SK-N-SH (cell line): ENCODE measurements at regions of chr18 and their contacts with region 1.

Region 1: DNA sequence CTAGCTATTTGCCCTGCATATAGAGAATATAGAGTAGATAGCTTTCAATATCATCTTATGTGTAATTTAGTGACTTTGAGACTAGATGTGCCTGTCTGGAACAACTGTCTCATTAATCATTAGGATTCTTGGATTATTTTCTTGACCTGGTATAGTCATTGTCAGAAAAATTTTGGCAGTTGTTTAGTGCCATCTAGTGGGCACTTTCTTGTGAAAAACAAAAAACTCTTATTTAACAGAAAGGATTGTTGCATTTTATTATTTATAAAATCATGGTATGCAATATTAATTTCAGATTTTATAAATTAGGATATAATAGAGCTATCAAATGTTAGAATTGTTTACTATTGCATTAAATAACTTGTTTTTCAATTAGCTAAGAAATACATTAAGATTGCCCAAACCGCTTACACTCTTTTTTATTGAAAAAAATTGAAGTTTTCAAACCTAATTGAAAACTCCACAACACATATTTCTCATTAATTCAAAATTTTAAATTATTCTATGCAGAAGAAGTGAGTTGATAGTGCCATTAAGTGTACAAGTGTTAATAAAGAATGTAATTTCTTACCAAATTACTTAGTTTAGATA is 80.3 kb downstream of the DYNAP start:
- DNase-seq: peak; percentile 39
- H3K4me3 ChIP-seq: no peak overlapping the region
- H3K27ac ChIP-seq: no peak overlapping the region
- H3K4me1 ChIP-seq: no peaks in the 10 kb centered on the region; a peak in 2 of 4 replicates
- H3K27me3 ChIP-seq: no peaks in the 10 kb centered on the region
- CTCF ChIP-seq: peak; percentile 76
- EP300 ChIP-seq: no peak
- RAD21 ChIP-seq: peak; percentile 80

Region 2: GRCh38 chr18:54181856-54182602 is 489.4 kb before region 1 on chr18:
- CTCF ChIA-PET with region 1: no interaction called
- POLR2A ChIA-PET with region 1: no interaction called
- DNase-seq: no peak
- H3K4me3 ChIP-seq: no peak overlapping the region
- H3K27ac ChIP-seq: no peak overlapping the region
- H3K4me1 ChIP-seq: no peaks in the 10 kb centered on the region
- H3K27me3 ChIP-seq: no peaks in the 10 kb centered on the region
- CTCF ChIP-seq: no peak
- EP300 ChIP-seq: no peak
- RAD21 ChIP-seq: no peak

Region 3: DNA sequence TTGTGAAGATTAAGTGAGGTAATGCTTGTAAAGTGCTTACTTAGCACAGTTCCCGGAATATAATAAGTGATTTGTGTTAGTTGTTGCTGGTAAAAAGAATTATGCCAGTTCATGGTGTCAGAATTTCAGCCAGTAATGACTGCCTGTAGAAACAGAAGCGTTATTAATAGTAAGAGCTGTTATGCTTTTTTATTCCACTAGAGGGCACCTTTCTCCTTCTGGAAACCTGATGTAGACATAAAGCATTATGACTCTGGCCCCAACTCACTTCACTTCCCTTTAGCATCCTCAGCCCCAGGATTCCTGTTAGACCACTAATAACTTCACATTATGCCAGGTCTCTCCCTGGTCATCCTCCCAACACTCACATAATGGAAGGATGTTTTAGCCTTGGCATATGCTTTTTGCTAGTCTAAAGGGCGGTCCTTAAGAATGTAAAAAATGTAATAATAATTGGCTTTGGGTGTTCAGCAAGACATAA is 278.8 kb before region 1 on chr18:
- CTCF ChIA-PET with region 1: interaction called, 20 read pairs
- POLR2A ChIA-PET with region 1: no interaction called
- DNase-seq: peak; percentile 52
- H3K4me3 ChIP-seq: no peak overlapping the region
- H3K27ac ChIP-seq: no peak overlapping the region
- H3K4me1 ChIP-seq: no peaks in the 10 kb centered on the region; a peak in 1 of 4 replicates
- H3K27me3 ChIP-seq: no peaks in the 10 kb centered on the region
- CTCF ChIP-seq: peak; percentile 81
- EP300 ChIP-seq: no peak
- RAD21 ChIP-seq: peak; percentile 77

Region 4: GRCh38 chr18:54444319-54444914 is 227.0 kb before region 1 on chr18:
- CTCF ChIA-PET with region 1: interaction called, 61 read pairs
- POLR2A ChIA-PET with region 1: no interaction called
- DNase-seq: peak; percentile 39
- H3K4me3 ChIP-seq: no peak overlapping the region; a peak in 1 of 4 replicates
- H3K27ac ChIP-seq: no peak overlapping the region
- H3K4me1 ChIP-seq: no peaks in the 10 kb centered on the region
- H3K27me3 ChIP-seq: no peaks in the 10 kb centered on the region
- CTCF ChIP-seq: peak; percentile 78
- EP300 ChIP-seq: no peak
- RAD21 ChIP-seq: peak; percentile 90

Region 5: DNA sequence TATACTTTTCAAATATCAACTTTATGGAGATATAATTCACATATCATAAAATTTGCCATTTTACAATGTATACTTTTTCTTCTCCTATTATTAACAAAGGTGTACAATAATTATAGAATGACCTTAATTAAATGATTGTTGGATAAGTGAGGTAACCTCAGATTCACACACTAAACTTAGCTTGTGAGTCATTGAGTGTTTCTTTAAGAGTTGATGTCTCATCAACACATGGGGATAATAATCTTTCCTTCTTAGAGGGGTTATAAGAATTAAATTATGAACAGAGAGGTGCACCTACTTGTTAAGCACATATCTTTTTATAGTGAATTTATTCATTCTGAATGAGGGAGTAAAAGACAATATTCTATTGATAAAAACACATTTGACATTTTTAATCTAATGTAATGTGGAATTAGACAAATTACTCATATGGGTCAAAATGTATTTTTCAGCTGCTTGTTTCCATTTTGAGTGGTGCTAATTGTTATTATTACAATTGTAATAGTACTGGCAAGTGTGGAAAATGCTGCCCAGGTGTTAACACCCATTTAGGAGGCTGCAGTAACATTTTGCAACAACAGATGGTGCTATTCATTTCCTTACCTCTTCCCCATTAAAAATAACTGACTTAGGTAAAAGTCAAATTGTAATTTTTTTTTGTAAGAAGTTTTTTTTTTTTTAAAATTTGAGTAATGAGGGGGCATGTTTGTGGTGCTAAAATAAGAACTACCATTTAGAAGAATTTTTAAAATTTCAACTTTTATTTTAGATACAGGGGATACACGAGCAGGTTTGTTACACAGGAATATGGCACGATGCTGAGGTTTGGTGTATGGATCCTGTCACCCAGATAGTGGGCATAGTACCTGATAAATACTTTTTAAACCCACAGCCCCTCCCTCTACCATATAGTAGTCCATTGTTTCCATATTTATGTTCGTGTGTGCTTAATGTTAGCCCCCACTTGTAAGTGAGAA is 112.5 kb before region 1 on chr18:
- CTCF ChIA-PET with region 1: interaction called, 38 read pairs
- POLR2A ChIA-PET with region 1: no interaction called
- DNase-seq: peak; percentile 17
- H3K4me3 ChIP-seq: peak overlapping the region in 1 of 2 experiments; percentile 19; a peak in 1 of 4 replicates
- H3K27ac ChIP-seq: no peak overlapping the region
- H3K4me1 ChIP-seq: no peaks in the 10 kb centered on the region
- H3K27me3 ChIP-seq: no peaks in the 10 kb centered on the region
- CTCF ChIP-seq: peak; percentile 78
- EP300 ChIP-seq: no peak
- RAD21 ChIP-seq: peak; percentile 68

Region 6: DNA sequence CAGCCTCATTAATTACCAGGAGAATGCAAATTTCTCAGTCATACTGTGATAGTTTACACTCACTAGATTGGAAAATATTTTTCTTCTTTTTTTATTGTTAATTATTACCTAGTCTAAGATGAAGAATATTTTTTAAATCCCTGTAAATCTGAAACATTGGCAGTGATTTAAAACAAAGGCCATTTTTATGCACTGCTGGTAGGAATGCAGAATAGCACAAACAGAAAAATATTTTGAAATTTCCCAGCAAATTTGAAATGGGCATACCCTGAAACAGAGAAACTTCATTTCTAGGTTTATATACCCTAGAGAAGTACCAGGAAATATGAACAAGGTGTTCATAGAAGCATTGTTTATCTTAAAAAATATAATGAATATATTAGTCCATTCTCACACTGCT is 49.3 kb before region 1 on chr18:
- CTCF ChIA-PET with region 1: no interaction called
- POLR2A ChIA-PET with region 1: no interaction called
- DNase-seq: no peak
- H3K4me3 ChIP-seq: no peak overlapping the region
- H3K27ac ChIP-seq: no peak overlapping the region
- H3K4me1 ChIP-seq: no peaks in the 10 kb centered on the region
- H3K27me3 ChIP-seq: no peaks in the 10 kb centered on the region
- CTCF ChIP-seq: peak; percentile 39
- EP300 ChIP-seq: no peak
- RAD21 ChIP-seq: no peak

Region 7: DNA sequence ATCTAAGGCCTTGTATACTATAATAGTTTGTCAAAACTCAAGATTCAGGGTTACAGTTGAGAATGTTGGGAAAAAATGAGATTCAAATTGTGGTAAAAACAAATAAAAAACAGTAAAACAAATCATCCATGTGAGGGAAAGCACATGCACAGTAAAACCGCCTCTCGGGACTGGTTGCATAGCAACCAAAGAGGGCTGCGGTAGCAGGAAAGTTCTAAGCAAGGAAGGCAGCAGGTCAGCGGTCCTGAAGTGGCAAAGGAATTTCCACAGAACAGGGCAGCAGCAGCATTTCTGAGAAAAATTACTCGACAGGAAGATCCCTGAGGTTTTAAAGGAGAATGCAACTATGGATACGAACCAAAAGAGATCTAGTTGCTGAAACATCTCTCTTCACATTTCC is 13.4 kb after region 1 on chr18:
- CTCF ChIA-PET with region 1: interaction called, 16 read pairs
- POLR2A ChIA-PET with region 1: no interaction called
- DNase-seq: peak; percentile 8
- H3K4me3 ChIP-seq: no peak overlapping the region
- H3K27ac ChIP-seq: no peak overlapping the region
- H3K4me1 ChIP-seq: peaks cover 4% of the 10 kb centered on the region in 2 experiments; a peak in 2 of 4 replicates
- H3K27me3 ChIP-seq: no peaks in the 10 kb centered on the region
- CTCF ChIP-seq: no peak
- EP300 ChIP-seq: no peak
- RAD21 ChIP-seq: no peak

Region 8: GRCh38 chr18:54950221-54950620 is 278.8 kb after region 1 on chr18:
- CTCF ChIA-PET with region 1: interaction called, 13 read pairs
- POLR2A ChIA-PET with region 1: no interaction called
- DNase-seq: no peak
- H3K4me3 ChIP-seq: no peak overlapping the region
- H3K27ac ChIP-seq: no peak overlapping the region
- H3K4me1 ChIP-seq: peaks cover 0 to 10% of the 10 kb centered on the region in 2 experiments; a peak in 1 of 4 replicates
- H3K27me3 ChIP-seq: no peaks in the 10 kb centered on the region
- CTCF ChIP-seq: peak; percentile 39
- EP300 ChIP-seq: no peak
- RAD21 ChIP-seq: peak; percentile 70

Region 9: GRCh38 chr18:54983041-54983686 is 311.8 kb after region 1 on chr18:
- CTCF ChIA-PET with region 1: interaction called, 34 read pairs
- POLR2A ChIA-PET with region 1: no interaction called
- DNase-seq: peak; percentile 67
- H3K4me3 ChIP-seq: no peak overlapping the region; a peak in 1 of 4 replicates
- H3K27ac ChIP-seq: peak overlapping the region in 1 of 2 experiments; percentile 28; a peak in 1 of 4 replicates
- H3K4me1 ChIP-seq: peaks cover 0 to 14% of the 10 kb centered on the region in 2 experiments; a peak in 2 of 4 replicates
- H3K27me3 ChIP-seq: no peaks in the 10 kb centered on the region
- CTCF ChIP-seq: peak; percentile 80
- EP300 ChIP-seq: peak; percentile 42 to 86; a peak in 3 of 4 replicates
- RAD21 ChIP-seq: peak; percentile 95